Activated CD4-positive, alpha-beta memory T cell treated with anti-CD3 and anti-CD28 coated beads for 36 hours (primary cell): ENCODE measurements at regions of chr9 and their contacts with region 1.

Region 1: DNA sequence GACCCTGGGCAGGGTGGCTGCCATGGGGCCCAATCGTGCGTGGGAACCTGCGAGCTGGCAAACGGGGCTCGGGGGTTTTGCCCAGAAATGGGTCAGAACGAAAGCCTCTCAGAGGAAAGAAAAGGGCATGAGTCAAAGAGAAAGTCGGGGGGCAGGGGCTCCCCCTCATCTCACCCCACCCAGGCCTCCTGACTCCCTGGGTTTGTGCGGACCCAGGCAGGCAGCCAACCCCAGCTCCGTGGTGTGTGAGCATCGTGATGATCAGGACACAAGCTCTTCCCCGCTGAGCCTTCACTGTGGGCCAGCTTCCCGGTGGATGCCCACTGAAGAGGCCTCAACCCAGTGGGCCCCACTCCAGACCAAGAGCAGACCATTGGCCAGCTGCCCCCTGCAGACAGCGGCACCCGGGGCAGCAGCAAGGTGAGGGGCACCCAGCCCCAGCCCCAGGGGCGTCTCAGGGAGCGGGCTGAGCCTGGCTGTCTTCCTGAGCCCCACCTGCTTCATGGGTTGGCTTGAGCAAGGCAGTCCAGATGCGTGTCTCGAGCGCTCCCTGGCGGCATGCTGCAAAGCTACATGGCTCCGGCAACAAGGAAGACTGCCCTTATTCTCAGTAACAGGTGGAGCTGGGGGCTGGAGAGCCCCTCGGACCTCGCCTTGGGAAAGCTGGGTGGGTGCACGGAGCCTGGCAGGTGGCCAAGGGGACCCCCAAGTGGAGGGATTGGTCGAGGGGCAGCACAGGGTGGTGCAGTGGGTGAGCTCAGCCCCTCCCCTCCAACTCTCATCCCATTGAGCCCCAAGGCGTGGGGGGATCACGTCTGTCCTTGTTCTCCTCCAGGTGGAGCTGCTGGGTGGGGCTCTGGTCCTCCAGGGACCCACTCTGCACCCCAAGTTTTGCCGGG is 3.2 kb upstream of the FUT7 start:
- DNase-seq: peak; percentile 93
- H3K4me3 Mint-ChIP-seq: peak overlapping the region; percentile 61
- H3K27ac Mint-ChIP-seq: peak overlapping the region; percentile 89
- H3K4me1 Mint-ChIP-seq: peaks cover 41% of the 10 kb centered on the region
- H3K27me3 Mint-ChIP-seq: no peaks in the 10 kb centered on the region

Region 2: GRCh38 chr9:136363106-136363605 is 672.0 kb before region 1 on chr9:
- CTCF ChIA-PET with region 1: no interaction called
- POLR2A ChIA-PET with region 1: no interaction called
- intact Hi-C with region 1: no loop called
- DNase-seq: peak; percentile 98
- H3K4me3 Mint-ChIP-seq: peak overlapping the region; percentile 83
- H3K27ac Mint-ChIP-seq: peak overlapping the region; percentile 88
- H3K4me1 Mint-ChIP-seq: peaks cover 9% of the 10 kb centered on the region
- H3K27me3 Mint-ChIP-seq: no peaks in the 10 kb centered on the region

Region 3: GRCh38 chr9:136769710-136770191 is 265.4 kb before region 1 on chr9:
- CTCF ChIA-PET with region 1: interaction called, 12 read pairs
- POLR2A ChIA-PET with region 1: no interaction called
- intact Hi-C with region 1: no loop called
- DNase-seq: peak; percentile 71
- H3K4me3 Mint-ChIP-seq: no peak overlapping the region
- H3K27ac Mint-ChIP-seq: no peak overlapping the region
- H3K4me1 Mint-ChIP-seq: peaks cover 17% of the 10 kb centered on the region
- H3K27me3 Mint-ChIP-seq: peaks cover 11% of the 10 kb centered on the region

Region 4: DNA sequence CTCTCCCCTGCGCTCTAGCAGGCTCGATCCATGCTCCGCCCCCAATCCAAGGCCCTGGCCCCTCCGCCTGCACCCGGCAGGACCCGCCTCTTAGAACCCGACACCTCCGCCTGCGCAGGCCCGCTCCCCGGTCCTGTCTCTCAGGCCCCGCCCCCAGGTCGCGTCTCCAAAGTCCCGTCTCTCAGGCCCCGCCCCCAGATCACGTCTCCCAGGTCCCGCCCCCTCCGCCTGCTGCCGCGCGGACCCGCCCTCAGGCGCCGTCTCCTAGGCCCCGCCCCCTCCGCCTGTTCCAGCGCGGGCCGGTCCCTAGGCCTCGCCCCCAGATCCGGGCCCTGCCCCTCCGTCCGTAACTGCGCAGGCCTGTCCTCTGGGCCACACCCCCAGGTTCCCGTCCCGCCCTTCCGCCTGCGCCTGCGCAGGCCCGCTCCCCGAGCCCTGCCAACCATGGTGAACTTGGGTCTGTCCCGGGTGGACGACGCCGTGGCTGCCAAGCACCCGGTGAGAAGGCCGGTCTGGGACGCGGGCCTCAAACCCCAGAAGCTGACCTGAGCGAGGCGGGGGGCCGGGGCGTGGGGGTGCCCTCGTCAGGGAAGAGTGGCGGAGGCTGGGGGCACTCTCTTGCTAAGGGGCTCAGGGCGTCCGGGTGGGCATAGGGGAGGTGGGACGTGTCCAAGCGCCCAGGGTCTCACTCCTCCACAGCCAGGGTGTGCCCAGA is 244.0 kb before region 1 on chr9 and contains the start of gene TMEM141:
- CTCF ChIA-PET with region 1: interaction called, 20 read pairs
- POLR2A ChIA-PET with region 1: no interaction called
- intact Hi-C with region 1: loop called (anchors 1 kb)
- DNase-seq: peak; percentile 100
- H3K4me3 Mint-ChIP-seq: peak within 1 kb of the TSS; percentile 81
- H3K27ac Mint-ChIP-seq: peak within 1 kb of the TSS; percentile 79
- H3K4me1 Mint-ChIP-seq: peaks cover 21% of the 10 kb centered on the region
- H3K27me3 Mint-ChIP-seq: peaks cover 1% of the 10 kb centered on the region
- total RNA-seq, gene TMEM141: 42.3 to 45.2 TPM

Region 5: GRCh38 chr9:136949817-136950655 is 85.1 kb before region 1 on chr9:
- CTCF ChIA-PET with region 1: interaction called, 49 read pairs
- POLR2A ChIA-PET with region 1: no interaction called
- intact Hi-C with region 1: loop called (anchors 10 kb)
- DNase-seq: peak; percentile 98
- H3K4me3 Mint-ChIP-seq: peak overlapping the region; percentile 78
- H3K27ac Mint-ChIP-seq: peak overlapping the region; percentile 76
- H3K4me1 Mint-ChIP-seq: peaks cover under 1% of the 10 kb centered on the region
- H3K27me3 Mint-ChIP-seq: no peaks in the 10 kb centered on the region

Region 6: GRCh38 chr9:137000177-137000883 is 34.8 kb before region 1 on chr9:
- CTCF ChIA-PET with region 1: interaction called, 29 read pairs
- POLR2A ChIA-PET with region 1: interaction called, 4 read pairs
- intact Hi-C with region 1: loop called (anchors 5 kb)
- DNase-seq: peak; percentile 69
- H3K4me3 Mint-ChIP-seq: no peak overlapping the region
- H3K27ac Mint-ChIP-seq: peak overlapping the region; percentile 54
- H3K4me1 Mint-ChIP-seq: peaks cover 30% of the 10 kb centered on the region
- H3K27me3 Mint-ChIP-seq: peaks cover 7% of the 10 kb centered on the region

Region 7: GRCh38 chr9:137046098-137046787 is 11.1 kb after region 1 on chr9 and contains the start of gene NPDC1:
- CTCF ChIA-PET with region 1: interaction called, 60 read pairs
- POLR2A ChIA-PET with region 1: no interaction called
- intact Hi-C with region 1: no loop called
- DNase-seq: peak; percentile 90
- H3K4me3 Mint-ChIP-seq: peak within 1 kb of the TSS; percentile 67
- H3K27ac Mint-ChIP-seq: no peak within 1 kb of the TSS
- H3K4me1 Mint-ChIP-seq: peaks cover 10% of the 10 kb centered on the region
- H3K27me3 Mint-ChIP-seq: peaks cover 34% of the 10 kb centered on the region
- total RNA-seq, gene NPDC1: 36.0 to 42.6 TPM

Region 8: GRCh38 chr9:137070201-137070905 is 35.2 kb after region 1 on chr9 and contains the start of gene SAPCD2:
- CTCF ChIA-PET with region 1: interaction called, 73 read pairs
- POLR2A ChIA-PET with region 1: no interaction called
- intact Hi-C with region 1: no loop called
- DNase-seq: peak; percentile 90
- H3K4me3 Mint-ChIP-seq: peak within 1 kb of the TSS; percentile 61
- H3K27ac Mint-ChIP-seq: no peak within 1 kb of the TSS
- H3K4me1 Mint-ChIP-seq: peaks cover 8% of the 10 kb centered on the region
- H3K27me3 Mint-ChIP-seq: no peaks in the 10 kb centered on the region
- total RNA-seq, gene SAPCD2: 6.4 to 6.6 TPM